ENCODE measurements at regions of chr3 and their contacts with region 1.

Region 1: GRCh38 chr3:107938143-107938542 is 152.7 kb downstream of the CD47 start:
- DNase-seq: peak; percentile 38 to 52 (median 39)
- H3K4me3 ChIP-seq: no peak overlapping the region
- H3K27ac ChIP-seq: no peak overlapping the region
- H3K4me1 ChIP-seq: no peaks in the 10 kb centered on the region
- H3K27me3 ChIP-seq: no peaks in the 10 kb centered on the region

Region 2: GRCh38 chr3:107992981-107993684 is 55.0 kb after region 1 on chr3:
- CTCF ChIA-PET with region 1: no interaction called
- POLR2A ChIA-PET with region 1: no interaction called
- DNase-seq: no peak
- H3K4me3 ChIP-seq: no peak overlapping the region
- H3K27ac ChIP-seq: no peak overlapping the region
- H3K4me1 ChIP-seq: peaks cover 0 to 8% (median 0%) of the 10 kb centered on the region in 4 experiments
- H3K27me3 ChIP-seq: no peaks in the 10 kb centered on the region

Region 3: GRCh38 chr3:108322352-108322751 is 384.2 kb after region 1 on chr3:
- CTCF ChIA-PET with region 1: interaction called, 10 read pairs
- POLR2A ChIA-PET with region 1: no interaction called
- DNase-seq: peak; percentile 49 to 69 (median 65)
- H3K4me3 ChIP-seq: no peak overlapping the region
- H3K27ac ChIP-seq: no peak overlapping the region
- H3K4me1 ChIP-seq: peaks cover 0 to 6% (median 0%) of the 10 kb centered on the region in 4 experiments
- H3K27me3 ChIP-seq: no peaks in the 10 kb centered on the region

Region 4: GRCh38 chr3:108477511-108478147 is 539.5 kb after region 1 on chr3:
- CTCF ChIA-PET with region 1: interaction called, 11 read pairs
- POLR2A ChIA-PET with region 1: no interaction called
- DNase-seq: peak; percentile 70 to 81 (median 77)
- H3K4me3 ChIP-seq: no peak overlapping the region
- H3K27ac ChIP-seq: no peak overlapping the region
- H3K4me1 ChIP-seq: no peaks in the 10 kb centered on the region
- H3K27me3 ChIP-seq: no peaks in the 10 kb centered on the region

Measured in common myeloid progenitor, CD34-positive (primary cell).